MCF 10A (cell line): ENCODE measurements at regions of chr6 and their contacts with region 1.

Region 1: DNA sequence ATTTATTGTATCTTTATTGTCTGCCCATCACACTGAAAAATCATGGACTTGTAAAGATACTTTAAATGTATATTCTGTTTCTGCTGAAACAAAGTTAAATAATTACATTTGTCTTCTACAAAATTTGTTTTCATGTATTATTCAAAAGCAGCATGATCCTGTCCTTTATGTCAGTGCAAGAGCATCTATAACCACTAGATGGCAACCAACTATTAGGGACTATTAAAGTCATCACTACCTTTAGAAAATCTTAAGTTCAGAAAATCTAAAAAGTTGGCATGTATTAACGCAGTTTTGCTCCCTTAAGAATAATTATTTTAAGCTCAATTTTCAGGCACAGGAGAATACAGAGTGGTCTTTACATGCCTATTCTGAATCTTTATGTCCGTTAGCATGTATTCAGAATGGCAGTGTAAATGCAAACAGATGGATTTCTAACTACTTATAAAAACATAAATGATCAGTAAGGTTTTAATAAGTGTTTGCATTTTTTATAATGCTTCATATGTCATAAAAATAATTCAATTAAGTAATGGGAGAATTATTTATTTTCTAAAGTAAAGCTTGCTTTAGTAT is 17.8 kb downstream of the TMEM30A start:
- DNase-seq: peak; percentile 65
- H3K4me3 Mint-ChIP-seq: no peak overlapping the region
- H3K27ac Mint-ChIP-seq: no peak overlapping the region
- H3K4me1 Mint-ChIP-seq: peaks cover 12% of the 10 kb centered on the region
- H3K27me3 Mint-ChIP-seq: no peaks in the 10 kb centered on the region
- CTCF ChIP-seq: peak; percentile 55

Region 2: DNA sequence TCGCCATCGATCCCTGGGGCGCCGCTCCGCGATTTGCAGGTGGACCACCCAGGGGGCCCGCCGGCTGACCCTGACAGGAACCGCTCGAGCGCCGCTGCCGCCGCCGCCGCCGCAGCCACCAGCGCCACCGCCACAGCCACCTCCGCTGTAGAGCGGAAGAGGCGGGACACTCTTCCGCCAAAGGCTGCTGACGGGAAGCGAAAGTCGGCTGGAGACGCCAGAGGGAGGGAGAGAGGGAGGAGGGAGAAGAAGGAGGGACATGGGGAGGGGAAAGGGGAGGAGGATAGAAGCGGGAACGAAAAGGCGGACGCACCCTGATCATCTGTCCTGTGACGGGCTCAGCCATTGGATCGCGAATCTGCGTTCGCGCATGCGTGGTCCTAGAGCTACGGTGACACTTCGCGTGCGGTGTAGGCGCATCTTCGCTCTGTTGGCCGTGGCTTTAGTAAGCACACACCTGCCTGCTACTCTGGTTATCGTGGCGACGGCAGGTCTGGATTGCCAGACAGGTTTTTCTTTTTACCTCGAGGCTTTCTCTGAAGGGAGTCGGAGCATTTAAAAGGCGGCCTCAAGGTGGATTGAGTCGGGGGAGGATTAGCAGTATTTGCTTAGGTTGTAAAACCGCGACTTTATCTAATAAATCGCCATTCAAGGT is 18.0 kb after region 1 on chr6 and contains the start of gene TMEM30A:
- CTCF ChIA-PET with region 1: interaction called, 25 read pairs
- POLR2A ChIA-PET with region 1: interaction called, 314 read pairs
- intact Hi-C with region 1: loop called (anchors 2 kb)
- DNase-seq: peak; percentile 99
- H3K4me3 Mint-ChIP-seq: no peak within 1 kb of the TSS
- H3K27ac Mint-ChIP-seq: no peak within 1 kb of the TSS
- H3K4me1 Mint-ChIP-seq: peaks cover 21% of the 10 kb centered on the region
- H3K27me3 Mint-ChIP-seq: no peaks in the 10 kb centered on the region
- CTCF ChIP-seq: no peak
- total RNA-seq, gene TMEM30A: 53.7 and 71.4 TPM in 2 replicates

Region 3: DNA sequence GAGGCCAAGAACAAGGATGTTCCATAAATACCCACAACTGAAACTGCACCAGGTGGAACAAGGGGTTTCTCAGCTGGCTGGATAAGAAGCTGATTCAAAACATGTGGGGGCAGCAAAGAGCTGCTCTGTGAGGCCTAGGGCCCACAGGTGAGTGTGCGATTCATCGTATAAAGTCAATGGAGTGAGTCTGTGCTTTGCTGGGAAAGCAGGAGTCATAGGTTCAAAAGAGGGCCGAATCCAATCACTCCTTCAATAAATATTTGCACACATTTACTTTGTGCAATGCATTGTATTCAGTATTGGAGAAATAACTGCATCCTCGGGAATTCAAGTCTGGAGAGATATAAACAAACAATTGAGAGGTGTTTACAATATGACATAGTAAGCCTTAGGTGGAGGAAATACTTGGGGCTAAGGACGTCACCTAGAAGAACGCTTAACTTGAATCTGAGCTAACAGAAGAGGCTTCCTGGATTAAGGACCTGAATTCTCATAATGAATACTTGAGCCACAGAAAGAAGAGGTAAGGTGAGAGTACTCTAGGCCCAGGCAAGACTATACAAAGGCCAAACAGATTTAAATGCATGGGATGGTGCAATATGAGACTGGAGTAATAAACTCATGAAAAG is 101.5 kb after region 1 on chr6:
- CTCF ChIA-PET with region 1: interaction called, 4 read pairs
- POLR2A ChIA-PET with region 1: no interaction called
- intact Hi-C with region 1: loop called (anchors 2 kb)
- DNase-seq: peak; percentile 62
- H3K4me3 Mint-ChIP-seq: no peak overlapping the region
- H3K27ac Mint-ChIP-seq: no peak overlapping the region
- H3K4me1 Mint-ChIP-seq: no peaks in the 10 kb centered on the region
- H3K27me3 Mint-ChIP-seq: no peaks in the 10 kb centered on the region
- CTCF ChIP-seq: peak; percentile 31